ENCODE measurements at regions of chr4 and their contacts with region 1.

Region 1: GRCh38 chr4:83034630-83035494 is at the start of gene COPS4:
- DNase-seq: peak; percentile 96 to 98
- ATAC-seq: peak; percentile 100
- H3K4me3 ChIP-seq: peak within 1 kb of the TSS; percentile 61 to 95
- H3K27ac ChIP-seq: peak within 1 kb of the TSS; percentile 80 to 87
- H3K4me1 ChIP-seq: peaks cover 0 to 5% of the 10 kb centered on the region in 2 donors
- H3K27me3 ChIP-seq: no peaks in the 10 kb centered on the region
- total RNA-seq, gene COPS4: 35.3 to 35.7 TPM

Region 2: DNA sequence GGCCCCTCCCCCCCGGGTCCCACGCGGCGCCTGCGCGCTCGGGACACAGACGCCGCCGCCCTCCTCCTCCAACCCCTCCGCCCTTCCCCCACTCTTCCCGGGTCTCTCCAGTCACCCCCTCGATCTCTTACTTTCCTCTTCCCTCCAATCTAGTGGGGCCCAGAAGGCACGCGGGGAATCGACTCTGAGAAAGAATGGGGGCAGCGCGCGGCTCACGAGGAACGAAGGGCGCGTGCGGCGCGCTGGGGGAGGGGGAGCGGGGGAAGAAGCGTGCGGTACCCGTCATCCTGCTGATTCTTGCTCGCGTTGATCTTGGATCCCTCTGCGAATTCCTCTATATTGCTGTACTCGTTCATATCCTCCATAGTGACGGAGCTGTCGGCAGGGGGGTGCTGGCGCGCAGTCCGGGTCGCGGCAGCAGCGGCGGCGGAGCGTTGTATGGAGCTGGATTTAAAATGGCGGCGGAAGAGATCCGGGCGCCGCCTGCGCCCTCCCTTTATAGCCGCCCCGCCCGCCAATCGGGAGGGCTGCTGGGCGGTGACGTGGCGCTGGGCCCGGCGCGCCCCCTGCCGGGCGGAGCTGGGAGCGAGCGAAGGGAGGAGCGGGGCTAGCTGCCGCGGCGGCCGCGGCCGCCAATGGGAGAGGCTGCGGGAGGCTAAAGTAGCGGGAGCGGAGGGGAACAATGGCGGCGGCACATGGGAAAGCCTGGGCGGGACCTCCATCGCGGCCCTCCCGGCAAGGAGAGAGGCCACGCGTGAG is 605.7 kb before region 1 on chr4:
- intact Hi-C with region 1: loop called in 1 of 2 experiments (anchors 10 kb)
- DNase-seq: peak; percentile 94 to 97
- ATAC-seq: peak; percentile 96
- H3K4me3 ChIP-seq: peak overlapping the region; percentile 90 to 93
- H3K27ac ChIP-seq: peak overlapping the region in 1 of 2 donors; percentile 97
- H3K4me1 ChIP-seq: peaks cover 0 to 6% of the 10 kb centered on the region in 2 donors
- H3K27me3 ChIP-seq: no peaks in the 10 kb centered on the region

Region 3: GRCh38 chr4:82753725-82754410 is 281.0 kb before region 1 on chr4:
- intact Hi-C with region 1: no loop called
- DNase-seq: no peak
- ATAC-seq: peak; percentile 39
- H3K4me3 ChIP-seq: no peak overlapping the region
- H3K27ac ChIP-seq: peak overlapping the region in 1 of 2 donors; percentile 47
- H3K4me1 ChIP-seq: no peaks in the 10 kb centered on the region
- H3K27me3 ChIP-seq: no peaks in the 10 kb centered on the region

Region 4: GRCh38 chr4:82890901-82891706 is 143.8 kb before region 1 on chr4 and contains the start of gene SEC31A:
- intact Hi-C with region 1: loop called in 1 of 2 experiments (anchors 2 kb)
- DNase-seq: peak; percentile 98 to 99
- ATAC-seq: peak; percentile 100
- H3K4me3 ChIP-seq: peak within 1 kb of the TSS; percentile 85 to 94
- H3K27ac ChIP-seq: peak within 1 kb of the TSS; percentile 86 to 99
- H3K4me1 ChIP-seq: peaks cover 0 to 1% of the 10 kb centered on the region in 2 donors
- H3K27me3 ChIP-seq: no peaks in the 10 kb centered on the region
- total RNA-seq, gene SEC31A: 297 to 338 TPM

Region 5: DNA sequence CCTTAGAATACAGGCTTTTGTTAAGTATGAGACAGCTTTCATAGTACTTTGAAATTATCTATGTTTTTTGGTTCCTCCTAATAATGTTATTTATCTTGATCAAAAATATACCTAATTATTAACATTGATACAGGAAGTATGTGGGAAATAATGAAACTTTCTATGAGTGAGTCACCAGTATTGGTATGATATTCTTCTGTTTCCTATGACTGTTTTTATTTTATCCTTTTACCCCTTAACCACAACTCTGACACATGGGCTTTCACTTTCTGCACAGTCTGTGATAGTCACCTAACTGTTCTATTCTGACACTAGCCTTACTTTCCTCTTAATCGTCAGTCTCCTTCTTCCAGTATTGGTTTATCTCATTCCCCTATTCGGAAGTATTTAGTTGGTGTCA is 129.7 kb before region 1 on chr4:
- intact Hi-C with region 1: no loop called
- DNase-seq: no peak
- ATAC-seq: no peak
- H3K4me3 ChIP-seq: no peak overlapping the region
- H3K27ac ChIP-seq: no peak overlapping the region
- H3K4me1 ChIP-seq: no peaks in the 10 kb centered on the region
- H3K27me3 ChIP-seq: no peaks in the 10 kb centered on the region